ENCODE measurements at regions of chr1 and their contacts with region 1.

Region 1: GRCh38 chr1:39799770-39800470 is 11.3 kb upstream of the BMP8B start:
- DNase-seq: no peak
- ATAC-seq: peak; percentile 85
- H3K4me3 ChIP-seq: no peak overlapping the region
- H3K27ac ChIP-seq: peak overlapping the region; percentile 53; the same call in 1 of the 2 replicates
- H3K4me1 ChIP-seq: peaks cover 6% of the 10 kb centered on the region
- H3K27me3 ChIP-seq: no peaks in the 10 kb centered on the region
- CTCF ChIP-seq: peak; percentile 65 to 88 (median 81)
- EP300 ChIP-seq: no peak
- POLR2A ChIP-seq: no peak
- RAD21 ChIP-seq: peak; percentile 58

Region 2: GRCh38 chr1:39701049-39701439 is 98.9 kb before region 1 on chr1:
- CTCF ChIA-PET with region 1: interaction called, 39 read pairs
- POLR2A ChIA-PET with region 1: interaction called, 5 read pairs
- RAD21 ChIA-PET with region 1: interaction called, 9 read pairs
- SMC1A ChIA-PET with region 1: interaction called, 3 read pairs
- in situ Hi-C with region 1: no loop called
- intact Hi-C with region 1: loop called (anchors 1 kb)
- DNase-seq: no peak
- ATAC-seq: no peak
- H3K4me3 ChIP-seq: no peak overlapping the region
- H3K27ac ChIP-seq: no peak overlapping the region
- H3K4me1 ChIP-seq: no peaks in the 10 kb centered on the region
- H3K27me3 ChIP-seq: no peaks in the 10 kb centered on the region; a peak in 1 of 4 replicates
- CTCF ChIP-seq: no peak
- EP300 ChIP-seq: no peak
- POLR2A ChIP-seq: no peak
- RAD21 ChIP-seq: no peak

Region 3: DNA sequence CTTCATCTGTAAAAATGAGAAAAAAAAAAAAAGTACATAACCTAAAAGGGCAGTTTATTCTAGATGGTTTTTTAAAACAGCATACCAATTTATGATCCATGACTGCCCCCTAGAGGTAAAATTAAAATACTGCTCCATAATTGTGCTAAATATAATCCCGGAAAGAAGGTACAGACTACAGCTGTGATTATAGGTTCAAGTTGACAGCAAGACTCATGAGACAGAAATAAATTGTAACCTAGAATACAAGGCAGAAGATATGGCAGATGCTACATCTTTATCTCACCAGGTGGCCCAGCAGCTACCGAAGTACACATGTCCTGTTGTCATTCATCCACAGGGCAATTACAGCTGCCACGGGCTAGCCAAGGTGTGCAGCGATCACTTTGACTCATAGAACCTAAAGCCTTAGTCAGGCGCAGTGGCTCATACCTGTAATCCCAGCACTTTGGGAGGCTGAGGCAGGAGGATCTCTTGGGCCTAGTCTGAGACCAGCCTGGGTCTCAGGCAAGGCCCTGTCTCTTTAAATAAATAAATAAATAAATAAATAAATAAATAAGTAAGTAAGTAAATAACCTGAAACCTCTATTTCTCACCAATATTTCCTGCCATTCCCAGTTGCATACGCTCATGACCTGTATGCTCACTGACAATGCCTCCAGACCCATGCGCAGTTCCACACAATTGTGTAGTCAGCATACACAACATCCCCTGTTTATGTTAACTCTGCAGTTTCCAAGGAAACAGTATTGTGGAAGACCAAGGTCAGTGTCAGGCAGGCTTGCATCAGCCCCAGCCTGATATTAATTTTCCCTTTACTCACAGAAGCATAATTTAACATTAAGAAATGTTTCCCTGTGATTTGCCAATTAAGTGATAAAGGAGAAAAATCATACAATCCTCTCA is 79.6 kb before region 1 on chr1:
- CTCF ChIA-PET with region 1: interaction called, 10 read pairs
- POLR2A ChIA-PET with region 1: no interaction called
- RAD21 ChIA-PET with region 1: no interaction called
- SMC1A ChIA-PET with region 1: interaction called, 3 read pairs
- in situ Hi-C with region 1: no loop called
- intact Hi-C with region 1: no loop called
- DNase-seq: no peak
- ATAC-seq: peak; percentile 76
- H3K4me3 ChIP-seq: no peak overlapping the region
- H3K27ac ChIP-seq: no peak overlapping the region
- H3K4me1 ChIP-seq: no peaks in the 10 kb centered on the region
- H3K27me3 ChIP-seq: no peaks in the 10 kb centered on the region
- CTCF ChIP-seq: peak; percentile 34 to 74 (median 59)
- EP300 ChIP-seq: no peak
- POLR2A ChIP-seq: no peak
- RAD21 ChIP-seq: peak; percentile 87

Region 4: GRCh38 chr1:39788758-39789570 is 11.0 kb before region 1 on chr1 and contains the start of gene BMP8B:
- CTCF ChIA-PET with region 1: interaction called, 14 read pairs
- POLR2A ChIA-PET with region 1: interaction called, 3 read pairs
- RAD21 ChIA-PET with region 1: interaction called, 9 read pairs
- SMC1A ChIA-PET with region 1: interaction called, 4 read pairs
- in situ Hi-C with region 1: no loop called
- intact Hi-C with region 1: no loop called
- DNase-seq: no peak
- ATAC-seq: peak; percentile 81
- H3K4me3 ChIP-seq: peak within 1 kb of the TSS; percentile 68; the same call in 1 of the 2 replicates
- H3K27ac ChIP-seq: no peak within 1 kb of the TSS
- H3K4me1 ChIP-seq: peaks cover 11% of the 10 kb centered on the region
- H3K27me3 ChIP-seq: 0 out of 4 replicates have a peak, but pooled peaks cover 0 to 3% of the 10 kb centered on the region in 2 experiments
- CTCF ChIP-seq: peak in 1 of 3 experiments; percentile 5; a peak in 1 of 6 replicates
- EP300 ChIP-seq: 0 out of 4 replicates have a peak, but pooled peaks of 1 of the 2 experiments have one; percentile 24
- POLR2A ChIP-seq: peak; percentile 73
- RAD21 ChIP-seq: no peak
- polyA plus RNA-seq, gene BMP8B: 0.23 to 0.37 TPM